ENCODE measurements at regions of chr1 and their contacts with region 1.

Region 1: DNA sequence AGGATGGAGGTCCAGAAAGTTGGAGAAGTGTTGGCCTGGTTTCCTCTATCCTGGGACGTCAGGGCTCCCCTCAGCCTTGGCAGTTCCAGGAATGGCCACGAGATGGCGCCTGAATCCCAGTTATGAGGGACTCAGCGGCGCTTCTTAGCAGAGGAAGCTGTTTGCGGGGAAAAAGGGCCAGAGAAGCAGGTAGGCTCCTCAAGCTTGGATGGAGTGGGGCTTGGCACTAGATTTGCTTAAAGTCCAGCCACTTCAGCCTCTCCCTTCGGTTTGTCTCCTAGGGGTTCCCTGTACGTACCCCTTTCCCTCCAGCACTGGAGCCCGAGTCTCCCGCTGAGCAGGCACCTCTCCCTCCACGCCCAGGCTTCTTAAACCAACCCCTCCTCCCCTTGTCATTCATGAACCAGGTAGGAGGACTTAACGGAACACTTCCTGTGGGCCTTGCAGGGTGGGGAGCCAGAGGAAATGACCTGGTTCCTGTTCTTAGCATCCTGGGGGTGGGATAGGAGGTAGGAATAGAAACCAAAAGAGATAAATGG is 32.0 kb upstream of the TENT5B start:
- DNase-seq: peak; percentile 16
- ATAC-seq: peak; percentile 94
- H3K4me3 ChIP-seq: no peak overlapping the region
- H3K27ac ChIP-seq: no peak overlapping the region
- H3K4me1 ChIP-seq: peaks cover 5% of the 10 kb centered on the region; the same call in 1 of the 2 replicates
- H3K27me3 ChIP-seq: peaks cover 0 to 2% of the 10 kb centered on the region in 2 experiments; a peak in 3 of 4 replicates
- CTCF ChIP-seq: peak; percentile 96 to 99 (median 98)
- EP300 ChIP-seq: no peak
- POLR2A ChIP-seq: no peak
- RAD21 ChIP-seq: peak; percentile 95

Region 2: GRCh38 chr1:26459573-26460031 is 585.1 kb before region 1 on chr1:
- CTCF ChIA-PET with region 1: no interaction called
- POLR2A ChIA-PET with region 1: no interaction called
- RAD21 ChIA-PET with region 1: no interaction called
- SMC1A ChIA-PET with region 1: no interaction called
- in situ Hi-C with region 1: no loop called
- intact Hi-C with region 1: no loop called
- DNase-seq: no peak
- ATAC-seq: no peak
- H3K4me3 ChIP-seq: no peak overlapping the region
- H3K27ac ChIP-seq: no peak overlapping the region
- H3K4me1 ChIP-seq: no peaks in the 10 kb centered on the region
- H3K27me3 ChIP-seq: no peaks in the 10 kb centered on the region
- CTCF ChIP-seq: no peak
- EP300 ChIP-seq: no peak
- POLR2A ChIP-seq: no peak
- RAD21 ChIP-seq: no peak

Region 3: DNA sequence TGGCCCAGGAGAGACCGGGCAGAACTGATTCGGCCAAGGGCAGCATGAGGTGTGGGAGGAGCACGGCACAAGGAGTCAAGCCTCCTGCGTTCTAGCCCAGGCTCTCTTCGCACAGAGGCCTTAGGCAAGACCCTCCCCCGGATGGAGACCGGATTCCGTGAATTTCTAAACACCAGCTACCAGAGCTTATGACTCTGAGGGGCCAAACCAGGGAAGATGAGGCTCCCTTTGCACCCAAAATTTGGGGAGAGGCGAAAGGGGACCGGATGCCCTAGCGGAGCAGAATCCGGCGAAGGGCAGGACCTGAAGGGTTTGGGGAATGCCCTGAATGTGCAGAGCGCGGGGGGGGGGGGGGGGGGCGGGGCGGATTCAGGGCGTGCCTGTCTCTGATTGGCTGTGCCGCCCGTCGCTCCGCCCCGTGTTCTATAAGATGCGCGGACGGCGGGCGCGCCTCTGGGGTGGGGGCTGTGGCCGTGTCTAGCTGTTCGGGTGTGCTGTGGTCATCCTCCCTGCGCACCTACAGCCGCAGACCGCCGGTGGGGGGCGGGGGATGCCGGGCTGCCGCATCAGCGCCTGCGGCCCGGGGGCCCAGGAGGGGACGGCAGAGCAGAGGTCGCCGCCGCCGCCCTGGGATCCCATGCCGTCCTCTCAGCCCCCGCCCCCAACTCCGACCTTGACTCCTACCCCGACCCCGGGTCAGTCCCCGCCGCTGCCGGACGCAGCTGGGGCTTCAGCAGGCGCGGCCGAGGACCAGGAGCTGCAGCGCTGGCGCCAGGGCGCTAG is 51.3 kb before region 1 on chr1 and contains the start of gene TRNP1:
- CTCF ChIA-PET with region 1: interaction called, 72 read pairs
- POLR2A ChIA-PET with region 1: no interaction called
- RAD21 ChIA-PET with region 1: interaction called, 57 read pairs
- SMC1A ChIA-PET with region 1: interaction called, 43 read pairs
- in situ Hi-C with region 1: no loop called
- intact Hi-C with region 1: loop called (anchors 5 kb)
- DNase-seq: no peak
- ATAC-seq: peak; percentile 74
- H3K4me3 ChIP-seq: peak within 1 kb of the TSS; percentile 58
- H3K27ac ChIP-seq: no peak within 1 kb of the TSS
- H3K4me1 ChIP-seq: peaks cover 5% of the 10 kb centered on the region
- H3K27me3 ChIP-seq: peaks cover 2 to 13% of the 10 kb centered on the region in 2 experiments
- CTCF ChIP-seq: no peak
- EP300 ChIP-seq: no peak
- POLR2A ChIP-seq: peak; percentile 48; the same call in 1 of the 2 replicates
- RAD21 ChIP-seq: no peak
- polyA plus RNA-seq, gene TRNP1: not detected

Region 4: GRCh38 chr1:27031235-27032118 is 13.2 kb before region 1 on chr1:
- CTCF ChIA-PET with region 1: interaction called, 44 read pairs
- POLR2A ChIA-PET with region 1: no interaction called
- RAD21 ChIA-PET with region 1: interaction called, 4 read pairs
- SMC1A ChIA-PET with region 1: interaction called, 5 read pairs
- in situ Hi-C with region 1: no loop called
- intact Hi-C with region 1: no loop called
- DNase-seq: no peak
- ATAC-seq: no peak
- H3K4me3 ChIP-seq: no peak overlapping the region
- H3K27ac ChIP-seq: no peak overlapping the region
- H3K4me1 ChIP-seq: no peaks in the 10 kb centered on the region
- H3K27me3 ChIP-seq: no peaks in the 10 kb centered on the region
- CTCF ChIP-seq: no peak
- EP300 ChIP-seq: no peak
- POLR2A ChIP-seq: no peak
- RAD21 ChIP-seq: no peak

Region 5: DNA sequence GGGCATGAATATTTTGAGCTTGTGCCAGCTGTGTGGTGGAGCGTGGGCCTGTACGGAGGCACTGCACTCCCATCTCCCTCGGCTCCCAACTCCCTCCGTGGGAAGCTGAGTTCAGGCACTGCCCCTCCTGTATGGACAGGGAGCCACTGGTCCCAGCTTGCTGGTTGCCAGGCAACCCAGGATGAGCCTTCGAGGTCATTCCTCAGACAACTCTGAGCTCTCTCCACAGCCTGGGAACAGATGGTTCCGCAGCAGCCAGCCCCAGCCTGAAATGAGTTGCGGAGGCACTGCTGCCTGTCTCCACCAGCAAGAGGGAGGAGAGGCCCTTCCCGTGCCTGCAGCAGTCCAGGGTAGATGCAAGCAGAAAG is 26.4 kb after region 1 on chr1:
- CTCF ChIA-PET with region 1: interaction called, 47 read pairs
- POLR2A ChIA-PET with region 1: no interaction called
- RAD21 ChIA-PET with region 1: interaction called, 4 read pairs
- SMC1A ChIA-PET with region 1: interaction called, 5 read pairs
- in situ Hi-C with region 1: no loop called
- intact Hi-C with region 1: no loop called
- DNase-seq: no peak
- ATAC-seq: no peak
- H3K4me3 ChIP-seq: no peak overlapping the region
- H3K27ac ChIP-seq: no peak overlapping the region
- H3K4me1 ChIP-seq: no peaks in the 10 kb centered on the region
- H3K27me3 ChIP-seq: no peaks in the 10 kb centered on the region
- CTCF ChIP-seq: no peak
- EP300 ChIP-seq: no peak
- POLR2A ChIP-seq: no peak
- RAD21 ChIP-seq: no peak

Region 6: DNA sequence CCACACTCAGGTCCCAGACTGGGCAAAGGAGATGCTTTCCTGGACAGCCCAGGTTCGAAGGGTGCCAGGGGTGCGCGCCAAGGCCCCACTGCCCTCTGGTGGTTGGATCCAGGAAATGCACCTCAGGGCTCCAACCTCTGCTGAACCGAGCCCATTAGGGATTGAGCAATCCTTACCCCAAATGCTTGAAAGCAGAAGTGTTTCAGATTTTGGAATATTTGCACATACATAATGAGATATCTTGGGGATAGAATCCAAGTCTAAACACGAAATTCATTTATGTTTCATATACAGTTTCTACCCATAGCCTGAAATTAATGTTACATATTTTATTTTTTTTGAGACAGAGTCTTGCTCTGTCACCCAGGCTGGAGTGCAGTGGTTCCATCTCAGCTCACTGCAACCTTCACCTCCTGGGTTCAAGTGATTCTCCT is 52.8 kb after region 1 on chr1:
- CTCF ChIA-PET with region 1: interaction called, 577 read pairs
- POLR2A ChIA-PET with region 1: interaction called, 7 read pairs
- RAD21 ChIA-PET with region 1: interaction called, 224 read pairs
- SMC1A ChIA-PET with region 1: interaction called, 176 read pairs
- in situ Hi-C with region 1: loop called (anchors 5 kb)
- intact Hi-C with region 1: loop called (anchors 1 kb)
- DNase-seq: no peak
- ATAC-seq: peak; percentile 78
- H3K4me3 ChIP-seq: no peak overlapping the region
- H3K27ac ChIP-seq: no peak overlapping the region
- H3K4me1 ChIP-seq: peaks cover 14% of the 10 kb centered on the region
- H3K27me3 ChIP-seq: no peaks in the 10 kb centered on the region
- CTCF ChIP-seq: peak; percentile 94 to 97 (median 94)
- EP300 ChIP-seq: no peak
- POLR2A ChIP-seq: no peak
- RAD21 ChIP-seq: peak; percentile 81

Region 7: DNA sequence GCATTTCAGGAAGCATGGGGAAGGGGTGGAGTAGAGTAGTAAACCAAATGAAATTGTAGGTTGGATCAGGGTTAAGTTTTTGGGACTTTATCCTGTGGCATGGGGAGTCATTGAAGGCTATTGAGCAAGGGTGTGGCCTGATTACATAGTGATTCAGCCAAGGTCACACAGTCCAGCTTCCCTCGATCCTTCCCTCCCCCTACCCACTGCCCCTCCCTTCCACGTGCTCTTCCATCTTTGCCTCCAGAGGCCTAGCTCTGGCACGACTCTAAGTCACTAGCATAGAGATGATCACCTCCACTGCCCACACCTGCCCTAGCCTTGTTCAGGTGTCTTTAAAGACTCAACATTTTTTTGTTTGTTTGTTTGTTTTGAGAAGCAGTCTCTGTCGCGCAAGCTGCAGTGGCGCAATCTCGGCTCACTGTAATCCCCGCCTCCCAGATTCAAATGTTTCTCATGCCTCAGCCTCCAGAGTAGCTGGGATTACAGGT is 147.4 kb after region 1 on chr1:
- CTCF ChIA-PET with region 1: interaction called, 14 read pairs
- POLR2A ChIA-PET with region 1: no interaction called
- RAD21 ChIA-PET with region 1: interaction called, 3 read pairs
- SMC1A ChIA-PET with region 1: interaction called, 7 read pairs
- in situ Hi-C with region 1: no loop called
- intact Hi-C with region 1: loop called (anchors 5 kb)
- DNase-seq: no peak
- ATAC-seq: no peak
- H3K4me3 ChIP-seq: no peak overlapping the region
- H3K27ac ChIP-seq: no peak overlapping the region
- H3K4me1 ChIP-seq: no peaks in the 10 kb centered on the region
- H3K27me3 ChIP-seq: no peaks in the 10 kb centered on the region; a peak in 1 of 4 replicates
- CTCF ChIP-seq: no peak
- EP300 ChIP-seq: no peak
- POLR2A ChIP-seq: no peak
- RAD21 ChIP-seq: no peak

Region 8: DNA sequence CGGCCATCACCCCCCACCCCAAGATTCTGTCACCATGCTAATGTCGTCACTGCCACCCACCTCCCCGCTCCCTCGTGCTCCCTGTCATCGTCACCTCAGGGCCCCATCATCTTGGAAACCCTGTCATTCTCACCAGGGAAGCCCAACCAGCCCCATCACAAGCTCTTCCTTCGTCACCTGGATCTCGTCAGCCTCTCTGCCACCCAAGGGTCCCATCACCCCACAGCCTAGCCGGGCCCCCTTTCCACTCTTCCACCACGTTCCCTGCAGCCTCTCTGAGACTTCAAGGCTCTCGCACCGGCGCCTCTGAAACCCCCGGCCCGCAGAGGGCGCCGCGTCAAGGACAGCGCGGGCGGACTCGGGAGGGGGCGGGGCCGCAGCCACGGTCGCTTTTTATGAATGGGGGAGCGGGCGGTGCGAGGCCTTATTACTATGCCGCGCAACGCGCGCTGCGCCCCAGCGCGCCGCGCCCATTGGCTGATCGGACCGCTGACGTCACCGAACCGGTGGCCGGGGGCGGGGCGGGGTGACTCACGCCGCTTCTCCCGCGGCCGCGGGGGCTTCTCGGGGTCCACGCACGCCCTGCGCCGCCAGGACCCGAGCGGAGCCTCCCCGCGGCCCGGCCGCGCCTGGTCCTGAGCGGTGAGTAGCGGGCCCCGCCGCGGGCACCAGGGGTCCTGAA is 347.6 kb after region 1 on chr1 and contains the start of gene GPR3:
- CTCF ChIA-PET with region 1: interaction called, 11 read pairs
- POLR2A ChIA-PET with region 1: no interaction called
- RAD21 ChIA-PET with region 1: interaction called, 8 read pairs
- SMC1A ChIA-PET with region 1: interaction called, 5 read pairs
- in situ Hi-C with region 1: no loop called
- intact Hi-C with region 1: loop called (anchors 2 kb)
- DNase-seq: no peak
- ATAC-seq: peak; percentile 89
- H3K4me3 ChIP-seq: peak within 1 kb of the TSS; percentile 71
- H3K27ac ChIP-seq: no peak within 1 kb of the TSS
- H3K4me1 ChIP-seq: peaks cover 8% of the 10 kb centered on the region
- H3K27me3 ChIP-seq: no peaks in the 10 kb centered on the region
- CTCF ChIP-seq: peak; percentile 47 to 61 (median 52)
- EP300 ChIP-seq: no peak
- POLR2A ChIP-seq: no peak
- RAD21 ChIP-seq: peak; percentile 31
- polyA plus RNA-seq, gene GPR3: not detected

Region 9: DNA sequence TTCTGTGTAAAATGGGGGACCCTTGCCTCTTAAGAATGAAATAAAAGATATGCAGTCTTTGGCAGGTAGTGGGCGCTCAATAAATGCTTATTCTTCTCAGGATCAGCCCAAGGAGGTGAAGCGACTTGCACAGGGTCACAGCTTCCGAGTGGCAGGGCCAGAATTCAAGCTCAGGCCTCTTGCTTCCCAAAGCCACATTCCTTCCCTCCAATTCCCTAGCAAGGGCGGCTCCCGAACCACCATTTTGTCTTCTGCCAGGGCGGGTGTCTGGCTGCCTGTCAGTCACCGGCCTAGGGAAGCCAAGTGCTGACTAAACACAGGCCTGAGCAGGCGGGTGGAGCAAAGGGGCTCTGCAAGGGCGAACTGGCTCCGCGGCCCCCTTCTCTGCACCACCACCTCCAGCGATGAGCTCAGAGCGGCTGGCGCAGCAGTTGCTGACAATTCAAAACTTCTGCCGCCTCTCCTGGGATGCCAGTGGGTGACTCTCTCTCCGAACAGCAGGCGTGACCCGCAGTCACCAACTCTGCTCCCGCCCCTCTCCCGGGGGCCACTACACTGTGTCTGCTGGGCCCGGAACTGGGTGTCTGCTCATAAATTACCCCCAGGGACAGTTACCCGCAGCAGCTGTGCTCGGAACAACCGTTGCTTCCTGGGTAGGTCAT is 358.5 kb after region 1 on chr1:
- CTCF ChIA-PET with region 1: no interaction called
- POLR2A ChIA-PET with region 1: no interaction called
- RAD21 ChIA-PET with region 1: no interaction called
- SMC1A ChIA-PET with region 1: no interaction called
- in situ Hi-C with region 1: no loop called
- intact Hi-C with region 1: no loop called
- DNase-seq: no peak
- ATAC-seq: peak; percentile 60
- H3K4me3 ChIP-seq: no peak overlapping the region
- H3K27ac ChIP-seq: peak overlapping the region; percentile 64
- H3K4me1 ChIP-seq: peaks cover 16% of the 10 kb centered on the region
- H3K27me3 ChIP-seq: no peaks in the 10 kb centered on the region
- CTCF ChIP-seq: peak; percentile 40 to 60 (median 57); a peak in 5 of 6 replicates
- EP300 ChIP-seq: no peak
- POLR2A ChIP-seq: peak; percentile 63; the same call in 1 of the 2 replicates
- RAD21 ChIP-seq: peak; percentile 75

Region 10: DNA sequence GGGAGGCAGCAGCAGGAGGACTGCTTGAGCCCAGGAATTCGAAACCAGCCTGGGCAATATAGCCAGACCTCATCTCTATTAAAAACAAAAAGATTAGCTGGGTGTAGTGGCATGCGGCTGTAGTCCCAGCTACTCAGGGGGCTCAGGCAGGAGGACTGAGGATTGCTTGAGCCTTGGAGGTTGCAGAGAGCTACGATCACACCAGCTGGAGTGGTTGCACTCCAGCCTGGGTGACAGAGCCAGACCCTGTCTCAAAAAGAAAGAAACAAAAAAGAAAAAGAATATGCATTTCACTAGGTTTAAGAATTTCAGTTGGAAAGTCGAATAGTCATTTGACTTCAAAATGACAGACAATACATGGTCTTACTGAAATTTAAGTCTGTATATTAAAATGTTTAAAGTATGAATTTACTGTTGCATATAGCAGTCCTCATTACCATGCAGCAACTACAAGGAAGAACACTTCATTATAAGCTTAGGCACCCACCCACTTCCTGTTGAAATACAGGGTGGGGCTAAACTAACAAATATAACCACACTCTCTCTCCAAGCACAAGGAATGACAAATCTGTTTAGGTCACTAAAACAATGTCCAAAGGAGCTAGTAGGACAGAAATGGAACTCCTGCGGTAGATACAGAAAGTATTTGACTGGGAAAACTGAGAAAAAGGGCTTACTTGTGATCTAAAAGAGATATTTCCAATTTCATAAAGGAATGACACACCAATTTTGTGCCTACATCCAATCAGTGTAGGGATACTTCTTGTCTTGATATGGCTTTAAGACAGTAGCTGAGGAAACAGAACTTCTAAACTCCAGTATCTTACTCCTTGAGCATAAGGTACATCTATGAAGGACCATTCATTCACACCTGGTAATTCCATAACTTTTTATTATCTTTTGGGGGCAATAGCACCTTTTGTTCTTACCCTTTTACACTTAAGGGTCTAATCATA is 391.8 kb after region 1 on chr1:
- CTCF ChIA-PET with region 1: no interaction called
- POLR2A ChIA-PET with region 1: no interaction called
- RAD21 ChIA-PET with region 1: no interaction called
- SMC1A ChIA-PET with region 1: no interaction called
- in situ Hi-C with region 1: no loop called
- intact Hi-C with region 1: no loop called
- DNase-seq: no peak
- ATAC-seq: peak; percentile 75
- H3K4me3 ChIP-seq: peak overlapping the region; percentile 48
- H3K27ac ChIP-seq: peak overlapping the region; percentile 82
- H3K4me1 ChIP-seq: peaks cover 71% of the 10 kb centered on the region
- H3K27me3 ChIP-seq: no peaks in the 10 kb centered on the region
- CTCF ChIP-seq: no peak
- EP300 ChIP-seq: no peak
- POLR2A ChIP-seq: no peak
- RAD21 ChIP-seq: no peak

Measured in GM12878 (cell line).